Pancreas (tissue), 10 donors: ENCODE measurements at regions of chr11 and their contacts with region 1.

Region 1: DNA sequence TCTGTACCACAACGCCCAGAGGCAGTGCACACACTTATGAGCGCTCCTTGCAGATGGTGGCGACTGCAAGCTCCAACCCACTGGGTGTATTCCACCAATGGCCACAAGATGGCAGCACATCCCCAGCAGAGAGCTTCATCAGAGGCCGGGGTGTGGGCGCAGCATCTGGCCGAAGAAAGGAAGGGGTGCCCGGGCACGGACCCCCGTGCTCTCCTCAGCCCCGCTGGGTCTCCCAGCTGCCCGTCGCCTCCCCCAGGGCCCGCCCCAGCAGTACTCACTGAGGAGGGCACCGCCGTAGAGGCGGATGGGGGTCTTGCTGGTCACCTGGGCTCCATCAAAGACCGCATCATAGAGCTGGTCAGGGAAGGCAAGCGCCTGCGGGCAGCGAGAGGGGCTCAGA is 14.2 kb downstream of the TP53I11 start:
- DNase-seq: peak; percentile 61 to 93 (median 86)
- ATAC-seq: peak; percentile 78 to 95 (median 88)
- H3K4me3 ChIP-seq: no peak overlapping the region
- H3K27ac ChIP-seq: no peak overlapping the region
- H3K4me1 ChIP-seq: no peaks in the 10 kb centered on the region
- H3K27me3 ChIP-seq: no peaks in the 10 kb centered on the region
- CTCF ChIP-seq: peak; percentile 72 to 97 (median 88)

Region 2: DNA sequence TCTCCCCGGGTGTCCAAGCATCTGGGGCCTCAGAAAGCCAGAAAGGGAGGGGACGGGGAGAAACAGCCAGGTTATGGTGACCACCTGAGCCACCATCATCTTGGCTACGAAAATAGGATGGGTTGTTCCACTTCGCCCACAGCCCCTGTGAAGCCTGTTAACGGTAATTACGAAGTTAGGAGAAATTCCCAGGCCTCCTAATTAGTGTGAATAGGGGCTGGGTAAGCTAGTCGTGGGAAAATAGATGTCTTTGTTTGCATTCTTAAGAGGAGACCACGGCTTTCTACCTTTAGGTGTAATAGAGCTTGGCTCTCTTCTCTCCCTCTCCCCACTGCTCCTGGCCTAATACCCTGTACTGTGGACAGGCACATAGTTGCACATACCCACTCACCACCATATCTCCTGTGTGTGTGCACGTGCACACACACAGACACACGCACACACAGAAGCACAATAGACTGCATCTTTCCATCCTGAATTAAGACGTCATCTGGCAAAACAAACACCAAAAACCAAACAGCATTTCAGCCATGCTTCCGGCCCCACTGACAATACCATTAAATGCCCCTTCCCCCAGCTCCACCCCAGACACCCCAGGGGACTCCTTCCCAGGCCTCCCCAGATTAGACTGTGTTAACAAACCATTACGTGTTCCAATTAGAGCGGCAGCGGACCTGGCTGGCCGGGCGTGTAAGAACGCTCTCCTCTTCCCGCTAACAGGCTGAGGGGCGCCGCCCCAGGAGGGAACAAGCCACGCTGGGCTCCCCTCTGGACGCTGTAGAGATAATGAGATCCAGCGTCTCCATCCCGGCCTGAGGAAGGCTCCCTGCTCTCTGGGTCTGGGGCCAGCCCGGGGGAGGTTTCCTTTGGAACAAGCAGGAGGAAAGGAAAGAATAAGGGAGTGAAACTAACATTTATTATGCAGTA is 58.7 kb before region 1 on chr11:
- intact Hi-C with region 1: no loop called
- DNase-seq: no peak
- ATAC-seq: no peak
- H3K4me3 ChIP-seq: no peak overlapping the region
- H3K27ac ChIP-seq: no peak overlapping the region
- H3K4me1 ChIP-seq: no peaks in the 10 kb centered on the region
- H3K27me3 ChIP-seq: no peaks in the 10 kb centered on the region
- CTCF ChIP-seq: no peak

Region 3: GRCh38 chr11:45301537-45302246 is 365.2 kb after region 1 on chr11:
- intact Hi-C with region 1: no loop called
- DNase-seq: no peak
- ATAC-seq: no peak
- H3K4me3 ChIP-seq: no peak overlapping the region
- H3K27ac ChIP-seq: no peak overlapping the region
- H3K4me1 ChIP-seq: no peaks in the 10 kb centered on the region
- H3K27me3 ChIP-seq: no peaks in the 10 kb centered on the region
- CTCF ChIP-seq: no peak

Region 4: GRCh38 chr11:45339729-45340519 is 403.4 kb after region 1 on chr11:
- intact Hi-C with region 1: loop called in 1 of 3 experiments (anchors 10 kb)
- DNase-seq: peak; percentile 86 to 97 (median 94)
- ATAC-seq: peak; percentile 93 to 100 (median 98)
- H3K4me3 ChIP-seq: peak overlapping the region in 1 of 4 donors; percentile 30
- H3K27ac ChIP-seq: no peak overlapping the region
- H3K4me1 ChIP-seq: peaks cover 0 to 3% (median 0%) of the 10 kb centered on the region in 3 donors
- H3K27me3 ChIP-seq: no peaks in the 10 kb centered on the region
- CTCF ChIP-seq: peak; percentile 85 to 94 (median 92)